ENCODE measurements at regions of chr12 and their contacts with region 1.

Region 1: DNA sequence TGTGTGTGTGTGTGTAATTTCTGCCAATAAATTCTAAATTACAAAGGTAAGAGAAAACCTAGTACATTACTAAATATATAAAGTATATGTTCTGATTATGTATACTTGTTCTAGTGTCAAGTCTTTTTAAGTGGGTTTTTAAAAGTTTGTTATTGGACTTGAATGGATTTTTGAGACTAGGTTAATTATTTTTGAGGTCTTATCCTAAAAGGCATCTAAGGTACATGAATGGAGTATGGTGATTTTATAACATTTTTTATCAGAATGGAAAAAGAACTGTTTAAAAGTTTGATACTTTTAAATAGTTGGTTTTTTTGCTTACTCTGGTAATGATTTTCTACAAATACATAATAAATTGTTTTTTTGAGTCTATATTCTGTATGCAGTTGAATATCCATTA is 22.5 kb upstream of the TMPRSS12 start:
- DNase-seq: no peak
- H3K4me3 Mint-ChIP-seq: no peak overlapping the region
- H3K27ac Mint-ChIP-seq: no peak overlapping the region
- H3K4me1 Mint-ChIP-seq: peaks cover 5% of the 10 kb centered on the region
- H3K27me3 Mint-ChIP-seq: no peaks in the 10 kb centered on the region
- CTCF ChIP-seq: no peak

Region 2: GRCh38 chr12:50732591-50732990 is 87.6 kb before region 1 on chr12:
- CTCF ChIA-PET with region 1: no interaction called
- POLR2A ChIA-PET with region 1: no interaction called
- intact Hi-C with region 1: no loop called
- DNase-seq: peak; percentile 90
- H3K4me3 Mint-ChIP-seq: peak overlapping the region; percentile 61
- H3K27ac Mint-ChIP-seq: peak overlapping the region; percentile 95
- H3K4me1 Mint-ChIP-seq: peaks cover 14% of the 10 kb centered on the region
- H3K27me3 Mint-ChIP-seq: no peaks in the 10 kb centered on the region
- CTCF ChIP-seq: no peak

Region 3: GRCh38 chr12:50986966-50987737 is 167.0 kb after region 1 on chr12:
- CTCF ChIA-PET with region 1: interaction called, 122 read pairs
- POLR2A ChIA-PET with region 1: interaction called, 34 read pairs
- intact Hi-C with region 1: loop called (anchors 1 kb)
- DNase-seq: peak; percentile 67
- H3K4me3 Mint-ChIP-seq: no peak overlapping the region
- H3K27ac Mint-ChIP-seq: no peak overlapping the region
- H3K4me1 Mint-ChIP-seq: peaks cover 6% of the 10 kb centered on the region
- H3K27me3 Mint-ChIP-seq: no peaks in the 10 kb centered on the region
- CTCF ChIP-seq: peak; percentile 38